Caco-2 (cell line): ENCODE measurements at regions of chr2 and their contacts with region 1.

Region 1: DNA sequence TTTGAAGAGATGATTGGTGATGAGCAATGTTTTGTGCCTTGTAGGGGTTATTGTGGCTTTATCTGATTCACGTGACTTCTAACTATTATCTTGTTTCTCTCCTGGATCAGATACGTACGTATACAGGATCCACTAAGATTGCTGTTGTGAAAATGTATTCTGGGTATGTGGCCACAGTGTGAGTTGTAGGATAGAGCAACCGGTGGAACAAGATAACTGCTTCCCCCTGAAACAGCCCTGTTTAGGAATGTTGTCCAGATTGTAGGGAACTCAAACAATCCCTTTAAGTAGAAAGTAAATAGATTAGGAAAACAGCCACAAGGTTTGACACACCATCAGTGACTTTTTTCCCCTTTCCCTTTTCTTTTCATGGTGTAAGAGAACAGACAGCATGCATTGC is 22.3 kb upstream of the MBOAT2 start:
- DNase-seq: peak in 1 of 2 experiments; percentile 66
- H3K4me3 ChIP-seq: no peak overlapping the region
- H3K4me3 Mint-ChIP-seq: no peak overlapping the region
- H3K27ac Mint-ChIP-seq: peak overlapping the region; percentile 12
- H3K4me1 ChIP-seq: peaks cover 15% of the 10 kb centered on the region
- H3K4me1 Mint-ChIP-seq: peaks cover 10% of the 10 kb centered on the region
- H3K27me3 ChIP-seq: no peaks in the 10 kb centered on the region
- H3K27me3 Mint-ChIP-seq: peaks cover 5% of the 10 kb centered on the region
- CTCF ChIP-seq: no peak

Region 2: DNA sequence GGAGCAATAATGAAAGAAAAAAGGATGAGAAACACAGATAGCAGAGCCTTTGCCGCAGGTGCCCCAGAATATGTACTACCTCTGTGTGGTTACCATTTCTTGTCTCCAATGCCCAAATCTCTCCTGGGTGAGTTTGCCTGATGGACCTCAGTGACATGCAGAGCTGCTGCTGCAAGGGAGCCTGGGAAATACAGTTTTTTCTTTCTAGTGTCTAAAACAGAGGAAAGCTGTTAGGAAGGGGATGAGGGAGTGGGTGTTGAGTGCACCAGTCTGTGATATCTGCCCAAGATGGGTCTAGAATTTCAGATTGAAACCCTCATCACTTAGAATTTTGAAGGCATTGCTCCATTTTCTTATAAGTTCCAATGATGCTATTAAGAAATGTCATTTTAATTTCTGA is 12.3 kb before region 1 on chr2:
- CTCF ChIA-PET with region 1: no interaction called
- POLR2A ChIA-PET with region 1: no interaction called
- intact Hi-C with region 1: loop called (anchors 1 kb)
- DNase-seq: no peak
- H3K4me3 ChIP-seq: no peak overlapping the region
- H3K4me3 Mint-ChIP-seq: no peak overlapping the region
- H3K27ac Mint-ChIP-seq: no peak overlapping the region
- H3K4me1 ChIP-seq: no peaks in the 10 kb centered on the region
- H3K4me1 Mint-ChIP-seq: no peaks in the 10 kb centered on the region
- H3K27me3 ChIP-seq: no peaks in the 10 kb centered on the region
- H3K27me3 Mint-ChIP-seq: peaks cover 13% of the 10 kb centered on the region
- CTCF ChIP-seq: no peak

Region 3: DNA sequence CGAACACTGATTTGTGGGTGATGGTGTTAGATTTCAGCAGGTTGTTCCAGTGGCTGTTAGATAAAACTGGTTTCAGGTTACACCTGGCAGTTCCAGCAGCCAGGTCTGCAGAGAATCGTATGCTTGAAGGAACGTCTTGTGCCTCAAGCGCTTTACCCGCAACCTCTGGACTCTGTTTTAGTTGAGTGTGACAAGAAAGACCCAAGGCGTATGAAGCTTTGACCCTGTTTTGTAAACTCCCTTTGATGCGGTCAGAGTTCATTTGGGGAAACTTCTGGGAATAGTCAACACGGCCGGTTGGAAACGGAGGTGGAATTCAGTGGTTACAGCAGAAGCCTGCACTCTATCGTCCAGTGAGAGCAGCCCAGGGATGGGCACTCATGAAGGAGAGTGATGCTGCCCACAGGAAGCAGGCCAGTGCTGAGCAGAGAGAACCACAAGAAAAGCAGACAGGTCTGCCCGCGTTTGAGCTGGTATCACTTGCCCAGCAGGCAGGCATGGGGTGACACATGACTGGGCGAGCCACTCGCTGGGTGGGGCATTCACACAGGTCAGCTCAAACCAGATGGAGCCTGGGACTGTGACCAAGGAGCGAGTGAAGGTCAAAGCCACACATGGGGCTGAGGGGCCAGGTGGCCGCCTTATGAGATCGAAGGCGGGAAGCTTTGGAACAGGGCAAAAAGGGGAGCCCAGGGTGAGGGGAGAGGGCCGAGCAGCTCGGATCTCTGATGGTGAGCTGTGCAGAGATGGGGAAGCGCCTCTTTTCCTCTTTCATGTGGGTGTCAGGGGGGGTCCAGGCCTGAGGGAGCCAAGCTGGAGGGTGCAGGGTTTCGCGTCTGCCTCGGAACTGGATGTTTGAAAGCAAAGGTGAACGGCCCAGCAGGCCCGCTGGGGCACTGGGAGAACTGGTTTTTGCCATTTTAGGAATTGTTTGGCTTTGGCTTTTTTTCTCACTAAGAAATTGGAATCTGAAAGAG is 77.4 kb after region 1 on chr2:
- CTCF ChIA-PET with region 1: no interaction called
- POLR2A ChIA-PET with region 1: no interaction called
- intact Hi-C with region 1: loop called (anchors 1 kb)
- DNase-seq: peak; percentile 63 to 84
- H3K4me3 ChIP-seq: no peak overlapping the region
- H3K4me3 Mint-ChIP-seq: peak overlapping the region; percentile 61
- H3K27ac Mint-ChIP-seq: peak overlapping the region; percentile 69
- H3K4me1 ChIP-seq: peaks cover 35% of the 10 kb centered on the region
- H3K4me1 Mint-ChIP-seq: peaks cover 34% of the 10 kb centered on the region
- H3K27me3 ChIP-seq: no peaks in the 10 kb centered on the region
- H3K27me3 Mint-ChIP-seq: no peaks in the 10 kb centered on the region
- CTCF ChIP-seq: peak in 1 of 2 experiments; percentile 23